MCF 10A (cell line): ENCODE measurements at regions of chr13 and their contacts with region 1.

Region 1: DNA sequence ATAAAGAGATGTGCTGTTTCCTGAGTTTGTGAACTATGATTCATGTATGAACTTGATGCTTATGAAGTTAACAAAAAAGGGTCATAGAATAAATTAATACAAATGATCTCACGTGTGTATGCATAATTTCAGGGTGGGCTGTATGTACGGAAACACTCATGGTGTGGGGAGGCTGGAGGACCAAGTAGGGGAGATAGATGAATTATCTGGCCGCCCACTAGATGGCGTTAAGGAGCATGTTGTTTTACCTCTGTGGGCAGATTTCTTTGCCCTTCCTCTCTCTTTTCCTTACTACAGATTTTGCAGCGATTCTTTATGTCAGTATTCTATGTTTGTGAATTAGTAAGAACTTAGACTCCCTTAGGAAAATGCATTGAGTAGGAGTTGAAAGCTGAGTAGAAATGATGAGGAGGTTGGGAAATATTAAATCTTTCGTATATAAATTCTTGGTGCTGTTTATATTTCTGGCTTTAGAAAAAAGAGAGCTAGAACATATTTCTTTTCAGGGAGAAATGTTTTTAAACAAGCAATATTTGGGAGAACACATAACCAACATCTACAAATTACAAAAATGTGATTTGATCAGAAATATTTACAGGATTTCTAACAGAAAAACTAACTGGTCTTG is 47.4 kb upstream of the TMTC4 start:
- DNase-seq: peak; percentile 72
- H3K4me3 Mint-ChIP-seq: no peak overlapping the region
- H3K27ac Mint-ChIP-seq: no peak overlapping the region
- H3K4me1 Mint-ChIP-seq: no peaks in the 10 kb centered on the region
- H3K27me3 Mint-ChIP-seq: no peaks in the 10 kb centered on the region
- CTCF ChIP-seq: peak; percentile 58

Region 2: DNA sequence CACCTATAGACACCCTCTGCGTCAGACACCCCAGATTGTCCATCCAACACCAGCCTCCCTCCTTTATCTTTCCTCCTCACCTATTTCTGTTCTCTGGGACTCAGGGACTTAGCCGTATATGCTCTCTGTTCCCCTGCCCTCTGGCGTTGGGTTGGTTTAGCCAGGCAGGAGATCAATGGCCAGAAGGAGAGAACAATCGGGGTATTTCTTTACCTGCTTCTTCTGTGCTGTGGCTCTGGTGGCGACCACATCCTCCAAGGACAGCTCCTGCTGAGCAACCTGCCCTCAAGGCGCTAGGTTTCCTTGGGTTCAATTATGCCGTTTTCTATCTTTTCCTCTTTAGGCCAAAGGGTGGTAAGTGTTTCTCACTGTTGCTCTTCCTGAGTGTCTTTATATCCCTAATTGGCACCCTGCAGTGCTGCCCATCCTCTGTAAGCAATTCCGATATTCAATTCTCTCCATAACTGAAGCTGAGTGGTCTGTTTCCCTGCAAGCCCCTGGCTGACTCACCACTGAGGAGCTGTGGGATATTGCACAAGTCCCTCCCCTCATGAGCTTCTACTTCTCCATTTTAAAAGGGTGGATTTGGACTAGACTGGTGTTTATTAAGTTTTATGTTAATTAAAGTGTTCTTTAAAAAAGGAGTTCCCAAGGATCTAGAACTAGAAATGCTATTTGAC is 16.3 kb after region 1 on chr13:
- CTCF ChIA-PET with region 1: interaction called, 28 read pairs
- POLR2A ChIA-PET with region 1: no interaction called
- intact Hi-C with region 1: no loop called
- DNase-seq: no peak
- H3K4me3 Mint-ChIP-seq: no peak overlapping the region
- H3K27ac Mint-ChIP-seq: no peak overlapping the region
- H3K4me1 Mint-ChIP-seq: no peaks in the 10 kb centered on the region
- H3K27me3 Mint-ChIP-seq: no peaks in the 10 kb centered on the region
- CTCF ChIP-seq: no peak

Region 3: GRCh38 chr13:100987953-100988352 is 266.0 kb after region 1 on chr13:
- CTCF ChIA-PET with region 1: interaction called, 7 read pairs
- POLR2A ChIA-PET with region 1: no interaction called
- intact Hi-C with region 1: loop called (anchors 1 kb)
- DNase-seq: peak; percentile 49
- H3K4me3 Mint-ChIP-seq: no peak overlapping the region
- H3K27ac Mint-ChIP-seq: no peak overlapping the region
- H3K4me1 Mint-ChIP-seq: no peaks in the 10 kb centered on the region
- H3K27me3 Mint-ChIP-seq: no peaks in the 10 kb centered on the region
- CTCF ChIP-seq: no peak

Region 4: GRCh38 chr13:101127741-101128353 is 405.8 kb after region 1 on chr13:
- CTCF ChIA-PET with region 1: interaction called, 29 read pairs
- POLR2A ChIA-PET with region 1: no interaction called
- intact Hi-C with region 1: loop called (anchors 1 kb)
- DNase-seq: peak; percentile 73
- H3K4me3 Mint-ChIP-seq: no peak overlapping the region
- H3K27ac Mint-ChIP-seq: no peak overlapping the region
- H3K4me1 Mint-ChIP-seq: no peaks in the 10 kb centered on the region
- H3K27me3 Mint-ChIP-seq: peaks cover 20% of the 10 kb centered on the region
- CTCF ChIP-seq: peak; percentile 85